Activated naive CD4-positive, alpha-beta T cell treated with anti-CD3 and anti-CD28 coated beads for 36 hours (primary cell): ENCODE measurements at regions of chr4 and their contacts with region 1.

Region 1: DNA sequence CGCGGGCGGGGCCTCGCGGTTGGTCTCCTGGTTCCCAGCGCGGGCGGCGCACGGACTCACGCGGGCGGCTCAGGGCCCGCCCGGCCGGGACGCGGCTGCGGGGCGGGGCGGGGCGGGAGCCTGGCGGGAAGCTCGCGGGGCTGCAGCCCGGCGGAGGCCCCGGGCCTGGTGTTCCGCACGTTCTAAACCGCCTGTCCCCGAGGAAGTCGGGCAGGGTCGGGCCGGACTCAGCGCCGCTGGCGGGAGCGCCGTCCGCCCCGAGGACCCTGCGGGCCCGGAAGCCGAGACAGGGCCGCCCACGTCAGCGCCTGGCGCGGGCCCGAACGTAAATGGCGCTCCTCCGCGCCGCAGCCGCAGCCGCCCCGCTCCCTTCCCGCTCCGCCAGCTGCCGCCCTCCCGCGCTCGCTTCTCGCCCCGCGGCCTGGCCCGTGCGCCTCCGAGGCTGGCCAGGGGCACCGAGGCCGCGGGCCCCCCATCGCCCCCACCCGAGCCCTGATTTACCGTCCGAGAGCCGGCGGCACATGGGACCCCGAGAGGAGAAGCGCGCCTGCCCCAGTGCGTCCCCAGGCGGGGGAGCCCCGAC is 309 bp upstream of the CTBP1 start:
- DNase-seq: peak; percentile 77
- H3K4me3 Mint-ChIP-seq: peak overlapping the region; percentile 82
- H3K27ac Mint-ChIP-seq: peak overlapping the region; percentile 94
- H3K4me1 Mint-ChIP-seq: peaks cover 73% of the 10 kb centered on the region
- H3K27me3 Mint-ChIP-seq: no peaks in the 10 kb centered on the region

Region 2: GRCh38 chr4:845233-845835 is 403.9 kb before region 1 on chr4:
- CTCF ChIA-PET with region 1: no interaction called
- intact Hi-C with region 1: no loop called
- DNase-seq: no peak
- H3K4me3 Mint-ChIP-seq: no peak overlapping the region
- H3K27ac Mint-ChIP-seq: no peak overlapping the region
- H3K4me1 Mint-ChIP-seq: no peaks in the 10 kb centered on the region
- H3K27me3 Mint-ChIP-seq: no peaks in the 10 kb centered on the region

Region 3: DNA sequence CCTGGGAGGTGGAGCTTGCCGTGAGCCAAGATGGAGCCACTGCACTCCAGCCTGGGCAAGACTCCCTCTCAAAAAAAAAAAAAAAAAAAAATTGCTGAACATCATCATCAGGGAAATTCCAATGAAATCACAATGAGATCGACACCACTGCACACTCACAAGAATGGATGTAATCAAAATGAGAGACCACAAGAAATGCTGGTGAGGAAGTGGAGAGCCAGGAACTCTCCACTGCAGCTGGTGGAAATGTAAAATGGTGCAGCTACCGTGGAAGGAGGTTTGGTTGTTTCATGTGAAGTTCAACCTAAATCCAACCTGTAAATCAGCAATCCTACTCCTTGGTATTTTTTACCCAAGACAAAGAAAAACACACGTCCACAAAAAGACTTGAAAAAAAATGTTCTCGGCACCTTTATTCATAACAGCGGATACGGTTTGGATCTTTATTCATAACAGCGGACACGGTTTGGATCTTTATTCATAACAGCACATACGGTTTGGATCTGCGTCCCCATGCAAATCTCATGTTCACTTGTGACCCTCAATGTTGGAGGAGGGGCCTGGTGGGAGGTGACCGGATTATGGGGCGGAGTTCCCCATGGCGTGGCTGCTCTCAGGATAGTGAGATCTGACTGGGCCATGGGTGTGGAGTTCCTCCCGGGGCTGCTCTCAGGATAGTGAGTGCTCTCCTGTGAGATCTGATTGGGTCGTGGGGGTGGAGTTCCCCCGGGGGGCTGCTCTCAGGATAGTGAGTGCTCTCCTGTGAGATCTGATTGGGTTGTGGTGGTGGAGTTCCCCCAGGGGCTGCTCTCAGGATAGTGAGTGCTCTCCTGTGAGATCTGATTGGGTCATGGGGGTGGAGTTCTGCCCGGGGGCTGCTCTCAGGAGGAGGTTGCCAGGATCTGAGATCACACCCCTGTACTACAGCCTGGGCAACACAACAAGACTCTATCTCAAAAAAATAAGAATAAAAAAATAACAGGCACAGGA is 324.8 kb before region 1 on chr4:
- CTCF ChIA-PET with region 1: no interaction called
- intact Hi-C with region 1: loop called (anchors 5 kb)
- DNase-seq: peak; percentile 65
- H3K4me3 Mint-ChIP-seq: peak overlapping the region; percentile 7
- H3K27ac Mint-ChIP-seq: peak overlapping the region; percentile 90
- H3K4me1 Mint-ChIP-seq: peaks cover 69% of the 10 kb centered on the region
- H3K27me3 Mint-ChIP-seq: no peaks in the 10 kb centered on the region

Region 4: GRCh38 chr4:1167247-1167949 is 81.8 kb before region 1 on chr4:
- CTCF ChIA-PET with region 1: interaction called, 4 read pairs
- intact Hi-C with region 1: loop called (anchors 1 kb)
- DNase-seq: peak; percentile 93
- H3K4me3 Mint-ChIP-seq: peak overlapping the region; percentile 74
- H3K27ac Mint-ChIP-seq: no peak overlapping the region
- H3K4me1 Mint-ChIP-seq: peaks cover 18% of the 10 kb centered on the region
- H3K27me3 Mint-ChIP-seq: peaks cover 15% of the 10 kb centered on the region

Region 5: GRCh38 chr4:1266881-1267763 is 17.9 kb after region 1 on chr4:
- CTCF ChIA-PET with region 1: interaction called, 16 read pairs
- intact Hi-C with region 1: loop called (anchors 1 kb)
- DNase-seq: no peak
- H3K4me3 Mint-ChIP-seq: peak overlapping the region; percentile 58
- H3K27ac Mint-ChIP-seq: peak overlapping the region; percentile 65
- H3K4me1 Mint-ChIP-seq: peaks cover 10% of the 10 kb centered on the region
- H3K27me3 Mint-ChIP-seq: no peaks in the 10 kb centered on the region

Region 6: DNA sequence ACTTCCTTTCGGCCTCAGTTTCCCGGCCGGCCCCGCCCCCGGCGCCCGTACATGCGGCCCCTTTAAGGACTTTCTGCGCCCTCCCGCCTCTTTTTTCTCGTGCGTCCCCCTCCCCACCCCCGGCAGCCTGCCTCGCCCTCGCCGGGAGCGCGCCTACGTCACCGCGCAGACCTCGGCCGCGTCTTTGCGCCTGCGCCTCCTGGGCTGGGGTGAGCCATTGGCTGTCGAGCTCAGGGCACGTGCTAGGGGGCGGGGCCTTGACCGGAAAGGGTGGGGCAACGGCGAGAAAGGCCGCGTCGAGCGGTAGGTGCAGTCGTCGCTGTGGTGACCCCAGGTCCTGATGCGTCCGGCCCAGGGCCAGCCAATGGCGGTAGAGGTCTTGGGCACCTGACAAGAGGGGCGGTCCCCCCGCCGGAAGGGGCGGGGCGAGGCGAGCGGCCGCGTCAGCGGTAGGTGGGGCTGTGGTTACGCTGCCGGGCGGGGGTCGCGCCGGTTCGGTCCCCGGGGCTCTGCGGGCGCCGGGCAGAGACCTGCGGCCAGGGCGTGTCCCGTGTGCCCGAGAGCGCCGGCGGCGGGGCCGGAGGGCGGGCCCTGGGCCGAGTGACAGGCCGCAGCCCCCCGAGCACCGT is 97.7 kb after region 1 on chr4 and contains the start of gene UVSSA:
- CTCF ChIA-PET with region 1: interaction called, 5 read pairs
- intact Hi-C with region 1: loop called (anchors 1 kb)
- DNase-seq: peak; percentile 100
- H3K4me3 Mint-ChIP-seq: peak within 1 kb of the TSS; percentile 80
- H3K27ac Mint-ChIP-seq: peak within 1 kb of the TSS; percentile 78
- H3K4me1 Mint-ChIP-seq: peaks cover 46% of the 10 kb centered on the region
- H3K27me3 Mint-ChIP-seq: no peaks in the 10 kb centered on the region
- total RNA-seq, gene UVSSA: 20.0 to 24.3 TPM

Region 7: GRCh38 chr4:1856042-1856788 is 607.0 kb after region 1 on chr4 and contains the start of gene LETM1:
- CTCF ChIA-PET with region 1: no interaction called
- intact Hi-C with region 1: loop called (anchors 5 kb)
- DNase-seq: peak; percentile 95
- H3K4me3 Mint-ChIP-seq: peak within 1 kb of the TSS; percentile 79
- H3K27ac Mint-ChIP-seq: no peak within 1 kb of the TSS
- H3K4me1 Mint-ChIP-seq: peaks cover 38% of the 10 kb centered on the region
- H3K27me3 Mint-ChIP-seq: no peaks in the 10 kb centered on the region
- total RNA-seq, gene LETM1: 36.3 to 40.5 TPM